Ascending aorta (tissue), 2 donors: ENCODE measurements at regions of chr5 and their contacts with region 1.

Region 1: DNA sequence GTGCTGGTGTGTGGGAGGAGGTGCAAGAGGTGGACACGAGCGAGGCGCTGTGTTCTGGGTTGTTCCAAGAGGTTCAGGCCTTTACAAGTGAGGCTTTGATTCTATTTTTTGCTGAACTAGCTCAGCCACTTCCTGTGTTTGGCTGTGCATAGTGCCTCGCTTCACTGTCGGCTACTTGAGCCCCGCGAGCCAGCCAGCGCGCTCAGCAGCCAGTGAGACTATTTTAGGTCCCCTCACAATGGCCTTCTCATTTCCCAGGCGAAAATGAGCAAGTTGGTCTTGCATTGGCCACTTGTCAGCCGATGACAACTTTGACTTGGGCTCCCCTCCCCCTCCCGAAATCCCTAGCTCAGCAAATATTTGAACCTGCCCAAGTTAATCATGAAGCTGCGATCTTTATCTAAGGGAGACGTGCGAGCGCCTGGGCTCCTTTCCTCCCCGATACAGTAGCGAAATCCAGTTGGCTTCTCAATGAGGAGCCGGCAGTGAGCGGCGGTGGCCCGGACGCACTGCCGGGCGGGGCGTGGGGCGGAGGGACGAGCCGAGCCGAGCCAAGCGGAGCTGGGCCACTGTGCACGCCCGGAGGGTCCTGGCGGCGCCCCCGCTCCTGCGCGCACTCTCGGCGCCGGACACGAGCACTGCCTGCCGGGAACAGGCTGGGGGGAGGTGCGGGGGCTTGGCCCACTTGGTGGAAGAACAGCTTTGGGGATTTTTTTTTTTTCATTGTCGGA is 72.6 kb downstream of the PIK3R1 start:
- DNase-seq: peak; percentile 53 to 83
- H3K4me3 ChIP-seq: peak overlapping the region; percentile 63 to 75
- H3K27ac ChIP-seq: peak overlapping the region; percentile 90 to 91
- H3K4me1 ChIP-seq: peaks cover 13 to 52% of the 10 kb centered on the region in 2 donors
- H3K27me3 ChIP-seq: no peaks in the 10 kb centered on the region
- CTCF ChIP-seq: no peak

Region 2: DNA sequence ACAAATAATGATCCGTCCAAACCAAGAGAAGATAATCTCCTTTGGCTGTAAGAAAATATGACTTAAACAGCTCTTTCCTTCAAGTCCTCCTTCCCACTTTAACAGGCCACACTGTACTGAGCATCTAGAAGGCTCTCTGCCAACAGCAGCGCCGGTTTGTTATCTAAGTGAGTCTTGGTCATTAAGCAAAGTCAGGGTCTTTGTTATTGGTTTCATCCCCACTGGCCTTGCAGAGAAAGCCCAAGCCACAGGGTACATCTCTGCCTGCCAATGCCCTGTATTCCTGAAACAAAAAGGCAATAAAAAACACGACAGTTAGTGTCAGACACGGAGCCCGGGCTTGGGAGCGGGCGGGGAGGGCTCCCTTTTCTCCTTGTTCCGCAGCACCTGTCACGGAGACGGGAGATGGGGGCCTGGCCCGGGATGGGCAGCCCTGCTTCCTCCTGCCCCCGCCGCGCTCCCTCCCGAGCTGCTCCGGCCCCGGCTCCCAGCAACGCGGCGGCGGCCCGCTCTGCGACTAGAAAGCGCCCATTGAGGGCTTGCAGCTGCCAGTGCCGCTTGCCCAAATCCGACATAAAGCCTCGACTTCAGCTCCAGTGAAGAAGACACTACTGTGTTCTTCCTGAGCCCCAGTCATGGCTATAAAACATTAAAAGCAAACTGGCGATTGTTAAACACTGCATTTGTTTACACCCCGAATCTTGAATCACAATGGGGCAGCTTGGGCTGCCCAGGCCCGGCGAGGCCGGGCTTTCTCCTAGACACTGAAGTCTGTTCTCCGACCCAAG is 100.7 kb before region 1 on chr5:
- intact Hi-C with region 1: no loop called
- DNase-seq: no peak
- H3K4me3 ChIP-seq: peak overlapping the region; percentile 29 to 34
- H3K27ac ChIP-seq: peak overlapping the region; percentile 49 to 58
- H3K4me1 ChIP-seq: peaks cover 0 to 6% of the 10 kb centered on the region in 2 donors
- H3K27me3 ChIP-seq: no peaks in the 10 kb centered on the region
- CTCF ChIP-seq: no peak

Region 3: GRCh38 chr5:68343421-68343826 is 55.3 kb after region 1 on chr5:
- intact Hi-C with region 1: loop called (anchors 2 kb)
- DNase-seq: peak; percentile 78 to 92
- H3K4me3 ChIP-seq: no peak overlapping the region
- H3K27ac ChIP-seq: peak overlapping the region; percentile 78 to 80
- H3K4me1 ChIP-seq: peaks cover 0 to 18% of the 10 kb centered on the region in 2 donors
- H3K27me3 ChIP-seq: no peaks in the 10 kb centered on the region
- CTCF ChIP-seq: no peak

Region 4: GRCh38 chr5:68378204-68378824 is 90.2 kb after region 1 on chr5:
- intact Hi-C with region 1: loop called (anchors 5 kb)
- DNase-seq: no peak
- H3K4me3 ChIP-seq: no peak overlapping the region
- H3K27ac ChIP-seq: peak overlapping the region; percentile 13 to 56
- H3K4me1 ChIP-seq: peaks cover 0 to 20% of the 10 kb centered on the region in 2 donors
- H3K27me3 ChIP-seq: no peaks in the 10 kb centered on the region
- CTCF ChIP-seq: no peak

Region 5: DNA sequence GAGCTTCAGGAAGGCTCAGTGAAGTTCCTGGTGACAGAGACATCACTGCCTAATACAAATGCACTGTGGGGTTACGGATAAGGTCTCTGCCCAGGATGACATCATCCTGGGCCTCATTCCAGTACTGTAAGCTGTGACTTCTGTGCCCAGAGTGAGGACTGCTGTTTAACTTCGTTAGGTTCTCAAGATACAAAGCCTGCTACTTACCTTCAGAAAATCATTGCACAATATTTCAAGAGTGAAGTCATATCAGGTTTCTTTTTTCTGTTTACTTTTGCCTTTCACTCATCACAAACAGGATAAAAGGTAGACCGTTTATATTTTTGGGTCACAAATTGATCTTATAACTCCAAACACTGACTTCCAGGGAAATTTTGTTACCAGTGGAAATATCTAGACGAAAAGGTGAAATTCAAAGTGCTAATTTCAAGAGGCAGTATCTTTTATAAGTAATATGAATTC is 168.6 kb after region 1 on chr5:
- intact Hi-C with region 1: loop called (anchors 1 kb)
- DNase-seq: peak in 1 of 2 donors; percentile 66
- H3K4me3 ChIP-seq: no peak overlapping the region
- H3K27ac ChIP-seq: no peak overlapping the region
- H3K4me1 ChIP-seq: no peaks in the 10 kb centered on the region
- H3K27me3 ChIP-seq: no peaks in the 10 kb centered on the region
- CTCF ChIP-seq: no peak

Region 6: GRCh38 chr5:68962757-68963484 is 674.8 kb after region 1 on chr5:
- intact Hi-C with region 1: loop called (anchors 1 kb)
- DNase-seq: peak in 1 of 2 donors; percentile 80
- H3K4me3 ChIP-seq: no peak overlapping the region
- H3K27ac ChIP-seq: no peak overlapping the region
- H3K4me1 ChIP-seq: no peaks in the 10 kb centered on the region
- H3K27me3 ChIP-seq: no peaks in the 10 kb centered on the region
- CTCF ChIP-seq: peak; percentile 46 to 83 (median 71)